ENCODE measurements at regions of chr11 and their contacts with region 1.

Region 1: DNA sequence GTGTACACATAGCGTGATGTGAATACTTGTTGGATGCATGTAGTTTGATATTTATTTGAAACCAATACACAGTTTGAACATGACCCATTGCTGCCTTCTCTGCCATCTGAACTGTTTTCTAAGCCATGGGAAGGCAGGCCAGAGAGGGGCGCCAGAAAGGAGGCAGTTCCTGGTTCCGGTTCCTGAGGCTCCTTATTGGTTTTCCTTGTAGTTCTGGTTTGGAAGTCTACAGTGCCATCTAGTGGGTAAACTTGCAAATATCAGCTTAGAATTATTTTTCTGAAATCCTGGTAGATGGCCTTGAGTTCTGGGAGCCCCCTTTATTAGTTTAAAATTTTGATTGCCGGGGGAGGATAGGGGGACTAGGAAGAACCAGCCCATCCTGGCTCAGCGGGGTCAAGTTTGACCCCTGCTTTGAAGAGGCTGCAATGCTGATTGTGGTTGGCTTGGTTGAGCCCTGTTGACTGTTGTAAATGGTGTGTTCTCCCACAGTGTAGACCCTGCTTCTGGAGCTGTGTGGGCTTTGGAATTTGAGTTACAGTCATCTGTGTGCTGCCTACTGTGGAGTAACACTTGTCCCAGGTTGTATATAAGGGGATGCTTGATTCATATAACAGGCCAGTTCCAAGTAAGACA is 48.4 kb downstream of the GRAMD1B start:
- DNase-seq: peak in 1 of 2 donors; percentile 36
- ATAC-seq: peak; percentile 56 to 77
- H3K4me3 ChIP-seq: no peak overlapping the region
- H3K27ac ChIP-seq: no peak overlapping the region
- H3K4me1 ChIP-seq: peaks cover 0 to 8% of the 10 kb centered on the region in 2 donors
- H3K27me3 ChIP-seq: no peaks in the 10 kb centered on the region
- CTCF ChIP-seq: peak; percentile 68 to 78 (median 74)
- POLR2A ChIP-seq: no peak

Region 2: DNA sequence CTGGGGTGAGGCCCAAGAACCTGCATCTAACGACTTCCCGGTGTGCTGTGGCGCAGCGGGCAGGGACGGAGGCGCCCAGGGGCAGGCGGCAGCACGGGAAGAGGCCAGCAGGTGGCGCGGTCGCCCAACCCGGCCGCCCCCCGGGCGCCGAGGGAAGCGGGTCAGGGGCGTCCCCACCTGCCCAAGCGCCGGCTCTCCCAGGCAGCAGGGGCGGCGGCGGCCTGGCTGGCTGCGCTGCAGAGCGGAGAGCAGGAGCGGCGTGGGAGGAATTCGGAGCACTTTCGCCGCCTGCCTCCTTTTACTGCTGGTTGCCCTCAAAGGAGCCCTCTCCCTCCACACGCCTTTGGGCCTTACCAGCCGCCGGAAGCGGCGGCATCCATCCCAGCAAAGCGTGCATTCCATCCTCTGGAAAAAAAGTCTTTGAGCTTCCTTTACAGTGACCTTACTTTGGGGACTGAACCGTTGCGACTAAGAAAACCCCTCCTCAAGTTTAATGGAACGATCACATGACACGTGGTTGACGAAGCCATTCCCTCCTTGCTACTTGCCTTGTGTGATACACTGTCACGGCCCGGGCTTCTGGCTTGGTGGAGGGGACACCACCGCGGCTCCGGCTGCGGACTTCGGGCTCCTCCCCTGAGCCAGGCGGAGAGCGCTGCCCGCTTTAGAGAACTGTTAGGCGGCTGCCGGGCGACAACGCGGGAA is 176.6 kb before region 1 on chr11:
- in situ Hi-C with region 1: loop called (anchors 5 to 10 kb)
- intact Hi-C with region 1: loop called (anchors 1 kb)
- DNase-seq: peak; percentile 15 to 30
- ATAC-seq: peak; percentile 61 to 72
- H3K4me3 ChIP-seq: peak overlapping the region; percentile 38 to 60 (median 52)
- H3K27ac ChIP-seq: no peak overlapping the region
- H3K4me1 ChIP-seq: peaks cover 11 to 18% of the 10 kb centered on the region in 2 donors
- H3K27me3 ChIP-seq: no peaks in the 10 kb centered on the region
- CTCF ChIP-seq: peak; percentile 74 to 97 (median 89)
- POLR2A ChIP-seq: no peak

Region 3: DNA sequence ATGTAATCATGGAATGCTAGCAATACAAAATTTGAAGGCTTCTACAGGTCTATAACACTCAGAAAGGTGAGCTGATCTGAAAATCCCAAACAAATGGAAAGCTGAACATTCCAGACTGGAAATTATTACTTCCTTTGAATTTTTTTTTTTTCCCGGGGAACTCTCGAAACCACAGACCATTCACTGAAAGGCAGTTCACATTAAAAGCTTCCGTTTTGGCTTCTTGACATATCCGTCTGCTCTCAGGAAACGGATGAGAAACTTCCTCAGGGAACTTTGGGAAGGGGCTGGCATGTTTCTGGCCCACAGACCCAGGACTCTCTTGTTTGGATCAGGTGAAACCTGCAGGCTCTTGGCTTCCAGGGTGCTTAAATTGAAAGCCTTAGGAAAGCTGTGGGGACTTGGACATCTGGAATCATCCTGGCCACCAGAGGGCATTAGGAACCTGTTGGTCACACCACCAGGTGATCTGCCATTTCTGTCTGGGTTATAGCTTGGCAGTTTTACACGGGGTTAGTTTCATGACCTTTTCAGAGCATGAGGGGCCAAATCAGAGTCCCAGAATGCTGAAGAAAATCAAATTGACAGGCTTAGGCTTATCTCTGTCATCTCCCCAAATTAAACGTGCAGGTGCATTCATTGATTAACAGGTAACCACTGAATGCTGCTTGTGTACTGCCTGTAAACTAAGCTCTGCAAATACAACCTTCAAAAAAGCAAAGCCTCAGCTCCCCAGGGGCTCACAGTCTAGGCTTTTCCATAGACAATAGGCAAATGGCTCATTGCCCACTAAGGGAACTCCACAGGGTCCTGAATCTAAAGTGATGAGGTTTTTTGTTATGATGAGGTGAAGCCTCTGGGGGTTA is 71.1 kb before region 1 on chr11:
- in situ Hi-C with region 1: loop called (anchors 5 kb)
- intact Hi-C with region 1: loop called (anchors 1 kb)
- DNase-seq: peak; percentile 60
- ATAC-seq: peak; percentile 74 to 89
- H3K4me3 ChIP-seq: peak overlapping the region in 1 of 4 donors; percentile 23
- H3K27ac ChIP-seq: no peak overlapping the region
- H3K4me1 ChIP-seq: peaks cover 5 to 12% of the 10 kb centered on the region in 2 donors
- H3K27me3 ChIP-seq: no peaks in the 10 kb centered on the region
- CTCF ChIP-seq: peak; percentile 47 to 77 (median 74)
- POLR2A ChIP-seq: no peak

Region 4: GRCh38 chr11:123426789-123427188 is 51.7 kb before region 1 on chr11:
- in situ Hi-C with region 1: no loop called
- intact Hi-C with region 1: loop called (anchors 1 kb)
- DNase-seq: peak; percentile 39 to 43
- ATAC-seq: peak; percentile 81 to 83
- H3K4me3 ChIP-seq: no peak overlapping the region
- H3K27ac ChIP-seq: peak overlapping the region; percentile 52 to 83 (median 68)
- H3K4me1 ChIP-seq: peaks cover 34 to 39% of the 10 kb centered on the region in 2 donors
- H3K27me3 ChIP-seq: no peaks in the 10 kb centered on the region
- CTCF ChIP-seq: no peak
- POLR2A ChIP-seq: no peak

Measured in gastrocnemius medialis (tissue), 4 donors.